ENCODE measurements at regions of chr1 and their contacts with region 1.

Region 1: DNA sequence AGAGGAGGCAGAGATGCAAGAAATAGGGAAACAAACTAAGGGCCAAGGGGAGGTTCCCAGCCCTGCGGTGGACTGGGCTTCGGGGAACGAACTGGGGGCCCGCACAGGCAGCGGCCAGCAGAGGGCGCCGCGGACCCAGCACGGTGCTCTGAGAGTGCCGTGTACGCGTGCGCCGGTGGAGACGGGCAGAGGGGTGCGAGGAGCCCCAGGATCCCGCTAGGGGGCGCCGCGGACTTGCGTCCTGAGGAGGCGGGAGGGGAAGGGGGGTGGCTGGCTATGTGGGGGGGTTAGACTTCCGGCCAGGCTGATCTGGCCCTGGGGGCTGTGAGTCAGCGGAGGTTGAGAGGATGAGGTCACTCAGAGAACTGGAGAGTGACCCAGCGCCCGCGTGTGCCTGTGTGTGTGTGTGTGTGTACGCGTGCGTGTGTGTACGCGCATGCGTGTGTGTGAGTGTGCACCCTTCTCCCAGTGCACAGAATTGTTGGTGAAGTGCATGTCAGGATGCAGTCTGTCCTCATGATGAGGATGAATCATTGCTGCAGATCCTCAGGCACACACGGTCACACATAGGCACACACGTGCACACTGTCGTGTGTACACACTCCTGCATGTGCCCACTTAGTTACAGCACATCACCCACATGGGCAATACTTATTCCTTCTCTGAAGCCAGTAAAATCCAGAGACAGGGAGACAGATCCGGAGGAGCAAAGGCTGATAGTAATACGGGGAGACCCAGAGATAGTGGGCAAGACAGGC is 17.0 kb downstream of the NES start:
- DNase-seq: peak; percentile 86 to 99
- H3K4me3 ChIP-seq: peak overlapping the region in 1 of 2 donors; percentile 27
- H3K27ac ChIP-seq: peak overlapping the region; percentile 88 to 90
- H3K4me1 ChIP-seq: peaks cover 50 to 66% of the 10 kb centered on the region in 2 donors
- H3K27me3 ChIP-seq: no peaks in the 10 kb centered on the region
- CTCF ChIP-seq: peak; percentile 99 to 100 (median 99)

Region 2: GRCh38 chr1:156385534-156386031 is 274.6 kb before region 1 on chr1:
- intact Hi-C with region 1: loop called (anchors 2 kb)
- DNase-seq: no peak
- H3K4me3 ChIP-seq: no peak overlapping the region
- H3K27ac ChIP-seq: no peak overlapping the region
- H3K4me1 ChIP-seq: no peaks in the 10 kb centered on the region
- H3K27me3 ChIP-seq: no peaks in the 10 kb centered on the region
- CTCF ChIP-seq: peak; percentile 79 to 91 (median 86)

Region 3: DNA sequence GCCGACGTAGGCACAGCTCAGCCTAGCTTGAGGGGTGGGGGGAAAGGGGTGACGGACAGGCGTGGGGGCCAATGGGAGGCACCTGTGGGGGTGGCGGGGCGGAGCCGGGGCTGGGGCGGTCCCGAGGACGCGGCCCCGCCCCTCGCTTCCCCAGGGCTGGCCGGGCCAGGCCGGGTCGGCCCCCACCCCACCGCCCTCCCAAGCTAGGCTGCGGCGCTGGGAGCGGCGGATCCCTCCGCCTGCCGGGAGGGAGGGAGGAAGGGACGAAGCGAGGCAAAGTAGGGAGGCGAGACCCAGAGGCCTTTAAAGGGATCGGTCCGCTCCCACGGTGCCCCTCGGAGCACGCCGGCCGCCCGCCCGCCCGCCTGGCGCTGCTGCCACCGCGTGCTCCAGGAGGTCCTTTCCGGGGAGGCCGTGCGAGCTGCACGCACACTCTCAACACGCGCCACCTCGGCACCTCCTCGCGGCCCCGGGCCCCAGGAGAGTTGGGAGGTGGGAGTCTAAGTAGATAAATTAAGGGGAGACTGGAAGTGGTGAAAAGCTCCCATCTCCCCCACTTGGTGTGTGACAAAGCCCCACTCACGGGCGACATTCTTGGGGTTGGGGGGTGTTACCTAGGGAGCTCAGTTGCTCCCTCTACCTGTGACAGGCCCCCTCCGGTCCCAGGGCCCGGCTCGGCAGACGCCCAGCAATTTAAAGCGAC is 159.2 kb before region 1 on chr1:
- intact Hi-C with region 1: loop called (anchors 5 kb)
- DNase-seq: peak; percentile 82 to 96
- H3K4me3 ChIP-seq: peak overlapping the region; percentile 86 to 100
- H3K27ac ChIP-seq: peak overlapping the region; percentile 99 to 100
- H3K4me1 ChIP-seq: peaks cover 34 to 61% of the 10 kb centered on the region in 2 donors
- H3K27me3 ChIP-seq: no peaks in the 10 kb centered on the region
- CTCF ChIP-seq: peak in 2 of 3 experiments; percentile 39 to 55

Region 4: GRCh38 chr1:156583821-156584622 is 76.2 kb before region 1 on chr1:
- intact Hi-C with region 1: loop called (anchors 1 kb)
- DNase-seq: peak in 1 of 2 donors; percentile 89
- H3K4me3 ChIP-seq: no peak overlapping the region
- H3K27ac ChIP-seq: no peak overlapping the region
- H3K4me1 ChIP-seq: peaks cover 0 to 3% of the 10 kb centered on the region in 2 donors
- H3K27me3 ChIP-seq: no peaks in the 10 kb centered on the region
- CTCF ChIP-seq: peak; percentile 82 to 95 (median 88)

Region 5: GRCh38 chr1:156625436-156626078 is 34.6 kb before region 1 on chr1:
- intact Hi-C with region 1: loop called (anchors 1 kb)
- DNase-seq: no peak
- H3K4me3 ChIP-seq: peak overlapping the region; percentile 31 to 62
- H3K27ac ChIP-seq: no peak overlapping the region
- H3K4me1 ChIP-seq: peaks cover 8 to 17% of the 10 kb centered on the region in 2 donors
- H3K27me3 ChIP-seq: peaks cover 29% of the 10 kb centered on the region
- CTCF ChIP-seq: peak; percentile 67 to 80 (median 70)

Region 6: DNA sequence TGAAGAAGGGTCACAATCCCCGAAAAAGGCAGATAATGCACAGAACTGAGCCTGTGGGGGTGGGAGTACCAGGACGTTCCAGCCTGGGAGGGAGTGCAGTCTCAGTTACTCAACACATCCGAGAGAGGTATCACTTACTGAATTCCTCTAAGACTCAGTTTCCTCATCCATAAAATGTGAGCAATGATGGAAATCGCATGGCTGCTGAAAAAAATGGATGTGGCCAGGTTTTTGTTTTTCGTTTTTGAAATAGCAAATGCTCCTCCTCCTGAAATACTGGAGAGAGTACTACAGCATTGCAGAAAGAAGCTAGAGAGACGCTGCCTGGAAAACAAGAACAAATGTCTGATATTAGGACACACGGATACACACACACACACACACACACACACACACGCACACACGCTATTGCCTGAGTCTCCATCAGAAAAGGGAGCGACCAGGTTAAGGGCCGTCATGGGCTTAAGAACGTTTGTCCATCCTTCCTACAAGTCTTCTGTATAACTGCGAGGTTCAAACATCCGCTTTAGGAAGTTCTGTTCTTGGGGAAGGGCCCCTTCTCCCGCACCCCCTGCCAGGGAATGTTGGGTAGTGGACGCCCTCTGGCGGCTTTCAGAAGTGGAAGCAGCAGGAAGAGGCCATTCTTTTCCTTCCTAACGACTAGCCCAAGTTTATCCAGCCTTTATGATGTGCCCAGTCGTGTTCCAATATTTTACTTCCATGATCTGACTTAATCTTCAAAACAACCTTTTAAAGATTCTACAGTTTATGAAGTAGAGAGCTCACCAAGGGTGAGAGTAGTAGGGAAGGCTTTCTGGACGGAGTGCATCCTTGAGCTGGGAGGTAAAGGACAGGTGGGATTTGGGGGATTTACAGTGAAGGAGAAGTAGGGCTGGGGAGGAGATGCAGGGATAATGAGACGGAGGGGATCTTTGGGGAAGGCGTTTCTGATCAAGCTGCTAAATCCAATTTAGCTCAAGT is 17.7 kb after region 1 on chr1:
- intact Hi-C with region 1: loop called (anchors 1 kb)
- DNase-seq: peak in 1 of 2 donors; percentile 81
- H3K4me3 ChIP-seq: peak overlapping the region; percentile 51 to 70
- H3K27ac ChIP-seq: peak overlapping the region; percentile 71 to 78
- H3K4me1 ChIP-seq: peaks cover 10 to 13% of the 10 kb centered on the region in 2 donors
- H3K27me3 ChIP-seq: no peaks in the 10 kb centered on the region
- CTCF ChIP-seq: peak; percentile 86 to 95 (median 94)

Region 7: GRCh38 chr1:156705918-156706656 is 45.9 kb after region 1 on chr1:
- intact Hi-C with region 1: loop called (anchors 1 kb)
- DNase-seq: peak; percentile 19 to 85
- H3K4me3 ChIP-seq: peak overlapping the region; percentile 58 to 69
- H3K27ac ChIP-seq: peak overlapping the region; percentile 69 to 76
- H3K4me1 ChIP-seq: peaks cover 10 to 38% of the 10 kb centered on the region in 2 donors
- H3K27me3 ChIP-seq: no peaks in the 10 kb centered on the region
- CTCF ChIP-seq: peak; percentile 87 to 95 (median 91)

Region 8: GRCh38 chr1:156733989-156734584 is 73.9 kb after region 1 on chr1:
- intact Hi-C with region 1: no loop called
- DNase-seq: no peak
- H3K4me3 ChIP-seq: no peak overlapping the region
- H3K27ac ChIP-seq: no peak overlapping the region
- H3K4me1 ChIP-seq: peaks cover 0 to 4% of the 10 kb centered on the region in 2 donors
- H3K27me3 ChIP-seq: no peaks in the 10 kb centered on the region
- CTCF ChIP-seq: no peak

Measured in ascending aorta (tissue), 2 donors.